Activated B cell treated with CpG ODN at 0.5 μM for 24 hours (primary cell): ENCODE measurements at regions of chr12 and their contacts with region 1.

Region 1: GRCh38 chr12:31959161-31959700 is at the start of gene RESF1:
- DNase-seq: peak; percentile 82
- ATAC-seq: peak; percentile 87
- H3K4me3 Mint-ChIP-seq: peak within 1 kb of the TSS; percentile 99
- H3K27ac Mint-ChIP-seq: peak within 1 kb of the TSS; percentile 99
- H3K4me1 Mint-ChIP-seq: peaks cover 76% of the 10 kb centered on the region
- H3K27me3 Mint-ChIP-seq: no peaks in the 10 kb centered on the region
- CTCF ChIP-seq: no peak
- total RNA-seq, gene RESF1: 286 and 299 TPM in 2 replicates

Region 2: GRCh38 chr12:31650927-31651326 is 308.3 kb before region 1 on chr12:
- CTCF ChIA-PET with region 1: interaction called, 4 read pairs
- POLR2A ChIA-PET with region 1: interaction called, 12 read pairs
- intact Hi-C with region 1: loop called (anchors 1 kb)
- DNase-seq: no peak
- ATAC-seq: no peak
- H3K4me3 Mint-ChIP-seq: no peak overlapping the region
- H3K27ac Mint-ChIP-seq: no peak overlapping the region
- H3K4me1 Mint-ChIP-seq: peaks cover 26% of the 10 kb centered on the region
- H3K27me3 Mint-ChIP-seq: no peaks in the 10 kb centered on the region
- CTCF ChIP-seq: no peak

Region 3: GRCh38 chr12:31728917-31729640 is 230.2 kb before region 1 on chr12 and contains the start of gene AMN1:
- CTCF ChIA-PET with region 1: no interaction called
- POLR2A ChIA-PET with region 1: interaction called, 30 read pairs
- intact Hi-C with region 1: loop called (anchors 1 kb)
- DNase-seq: peak; percentile 100
- ATAC-seq: peak; percentile 90
- H3K4me3 Mint-ChIP-seq: peak within 1 kb of the TSS; percentile 92
- H3K27ac Mint-ChIP-seq: peak within 1 kb of the TSS; percentile 98
- H3K4me1 Mint-ChIP-seq: peaks cover 74% of the 10 kb centered on the region
- H3K27me3 Mint-ChIP-seq: no peaks in the 10 kb centered on the region
- CTCF ChIP-seq: no peak
- total RNA-seq, gene AMN1: 13.7 and 15.5 TPM in 2 replicates

Region 4: DNA sequence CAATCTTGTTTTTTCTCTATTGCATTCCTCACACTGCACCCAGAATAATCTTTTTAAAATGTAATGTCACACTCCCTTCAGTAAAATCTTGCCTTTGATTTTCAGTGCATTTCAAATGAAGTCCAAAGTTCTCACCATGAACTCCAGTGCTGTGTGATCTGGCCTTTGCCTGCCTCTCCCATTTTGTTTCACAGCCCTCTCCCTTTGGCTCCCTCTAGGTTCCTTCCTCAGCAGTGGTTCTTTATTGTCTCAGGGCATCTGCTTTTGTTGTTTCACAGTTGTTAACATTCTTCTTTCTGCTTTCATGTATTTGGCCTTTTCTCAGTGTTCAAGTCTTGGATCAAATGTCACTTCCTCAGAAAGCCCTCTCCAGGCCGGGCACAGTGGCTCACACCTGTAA is 145.9 kb before region 1 on chr12:
- CTCF ChIA-PET with region 1: interaction called, 3 read pairs
- POLR2A ChIA-PET with region 1: interaction called, 92 read pairs
- intact Hi-C with region 1: loop called (anchors 1 kb)
- DNase-seq: no peak
- ATAC-seq: no peak
- H3K4me3 Mint-ChIP-seq: no peak overlapping the region
- H3K27ac Mint-ChIP-seq: peak overlapping the region; percentile 69
- H3K4me1 Mint-ChIP-seq: peaks cover 45% of the 10 kb centered on the region
- H3K27me3 Mint-ChIP-seq: no peaks in the 10 kb centered on the region
- CTCF ChIP-seq: no peak

Region 5: GRCh38 chr12:31890295-31891285 is 68.6 kb before region 1 on chr12:
- CTCF ChIA-PET with region 1: interaction called, 3 read pairs
- POLR2A ChIA-PET with region 1: interaction called, 85 read pairs
- intact Hi-C with region 1: loop called (anchors 1 kb)
- DNase-seq: no peak
- ATAC-seq: peak; percentile 43
- H3K4me3 Mint-ChIP-seq: peak overlapping the region; percentile 45
- H3K27ac Mint-ChIP-seq: peak overlapping the region; percentile 82
- H3K4me1 Mint-ChIP-seq: peaks cover 71% of the 10 kb centered on the region
- H3K27me3 Mint-ChIP-seq: no peaks in the 10 kb centered on the region
- CTCF ChIP-seq: no peak

Region 6: GRCh38 chr12:31989571-31990362 is 30.5 kb after region 1 on chr12:
- CTCF ChIA-PET with region 1: no interaction called
- POLR2A ChIA-PET with region 1: interaction called, 10 read pairs
- intact Hi-C with region 1: no loop called
- DNase-seq: no peak
- ATAC-seq: no peak
- H3K4me3 Mint-ChIP-seq: no peak overlapping the region
- H3K27ac Mint-ChIP-seq: peak overlapping the region; percentile 11
- H3K4me1 Mint-ChIP-seq: peaks cover 41% of the 10 kb centered on the region
- H3K27me3 Mint-ChIP-seq: no peaks in the 10 kb centered on the region
- CTCF ChIP-seq: no peak

Region 7: DNA sequence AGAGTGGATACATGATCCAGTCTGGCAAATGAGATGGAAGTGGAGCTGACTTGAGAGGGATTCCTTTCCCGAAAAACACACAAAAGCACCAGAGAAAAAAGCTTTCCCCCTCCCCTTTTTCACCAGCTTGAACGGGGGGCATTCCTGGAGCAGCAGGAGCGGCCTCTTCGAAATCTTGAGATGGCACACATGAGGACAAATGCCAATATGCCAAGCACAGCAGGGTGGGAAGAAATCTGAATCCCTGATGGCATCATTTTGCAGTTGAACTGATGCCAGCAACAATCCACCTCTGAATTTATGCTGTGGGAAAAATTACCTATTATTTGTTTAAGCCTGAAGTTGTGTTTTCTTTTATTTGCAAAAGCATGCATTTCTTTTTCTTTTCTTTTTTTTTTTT is 117.7 kb after region 1 on chr12:
- CTCF ChIA-PET with region 1: no interaction called
- POLR2A ChIA-PET with region 1: no interaction called
- intact Hi-C with region 1: no loop called
- DNase-seq: no peak
- ATAC-seq: no peak
- H3K4me3 Mint-ChIP-seq: no peak overlapping the region
- H3K27ac Mint-ChIP-seq: no peak overlapping the region
- H3K4me1 Mint-ChIP-seq: no peaks in the 10 kb centered on the region
- H3K27me3 Mint-ChIP-seq: no peaks in the 10 kb centered on the region
- CTCF ChIP-seq: no peak

Region 8: DNA sequence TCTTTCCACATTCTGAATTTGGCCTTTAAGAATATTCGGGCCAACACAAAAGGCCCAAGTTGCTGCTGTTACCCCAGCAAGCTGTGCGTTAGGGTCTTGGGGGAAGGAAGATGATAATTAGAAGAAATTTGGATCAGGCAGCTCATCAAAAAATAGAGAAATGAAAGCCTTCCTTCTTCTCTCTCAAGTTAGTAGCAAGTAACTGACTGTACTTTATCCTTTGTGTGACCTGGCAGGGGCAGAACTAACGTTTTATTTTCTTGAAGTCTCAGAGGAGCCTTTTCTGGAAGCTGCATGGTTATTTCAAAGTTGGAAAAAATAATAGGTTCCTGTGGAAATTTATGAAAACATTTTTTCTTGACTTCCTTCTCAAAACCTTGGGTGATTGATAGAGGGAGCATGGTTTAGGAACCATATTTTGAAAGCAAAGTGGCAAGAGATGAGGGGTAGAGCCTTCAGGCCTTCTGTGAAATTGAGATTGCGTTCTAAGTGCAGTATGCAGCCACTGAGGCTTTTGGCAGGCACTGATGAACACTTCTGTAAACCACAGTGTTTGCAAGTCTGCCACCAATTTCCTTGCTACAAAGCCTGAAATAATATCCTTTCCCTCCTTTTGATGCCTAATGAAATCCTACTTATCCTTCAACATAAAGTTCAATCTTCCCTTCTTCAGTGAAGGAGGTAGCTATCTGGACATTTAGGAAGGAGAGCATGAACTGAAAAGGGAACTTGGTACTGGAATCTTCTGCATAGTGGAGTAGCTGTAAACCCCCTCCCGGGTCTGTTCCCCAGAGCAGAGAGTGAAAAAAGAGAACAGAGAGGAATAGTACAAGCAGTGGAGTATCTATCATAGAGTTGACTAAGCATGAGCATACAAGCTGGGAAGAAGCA is 563.3 kb after region 1 on chr12:
- CTCF ChIA-PET with region 1: no interaction called
- POLR2A ChIA-PET with region 1: no interaction called
- intact Hi-C with region 1: no loop called
- DNase-seq: no peak
- ATAC-seq: peak; percentile 82
- H3K4me3 Mint-ChIP-seq: peak overlapping the region; percentile 67
- H3K27ac Mint-ChIP-seq: peak overlapping the region; percentile 85
- H3K4me1 Mint-ChIP-seq: peaks cover 28% of the 10 kb centered on the region
- H3K27me3 Mint-ChIP-seq: no peaks in the 10 kb centered on the region
- CTCF ChIP-seq: no peak